ENCODE measurements at regions of chr16 and their contacts with region 1.

Region 1: DNA sequence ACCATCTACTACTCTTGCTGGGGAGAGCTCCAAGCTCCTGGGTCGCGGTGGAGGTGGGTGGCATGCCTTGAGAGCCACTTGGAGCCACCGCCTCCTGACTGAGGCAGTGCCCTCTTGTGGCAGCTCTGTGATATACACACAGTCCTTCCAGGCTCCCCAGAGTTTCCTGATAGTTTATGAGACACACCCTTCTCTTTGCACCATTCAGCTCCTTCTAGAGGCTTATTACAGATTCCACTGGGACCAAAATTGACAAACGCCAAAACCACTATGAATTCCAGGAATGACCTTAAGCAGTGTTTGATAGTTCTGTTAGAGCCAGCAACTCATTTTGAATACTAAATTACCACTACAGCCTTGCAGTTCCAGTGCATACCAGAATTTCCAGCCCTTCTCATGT is 170.1 kb upstream of the CDH13 start:
- DNase-seq: peak; percentile 44 to 69
- H3K4me3 ChIP-seq: no peak overlapping the region
- H3K27ac ChIP-seq: no peak overlapping the region
- H3K4me1 ChIP-seq: no peaks in the 10 kb centered on the region
- H3K27me3 ChIP-seq: peaks cover 0 to 3% (median 0%) of the 10 kb centered on the region in 4 experiments; a peak in 1 of 7 replicates
- CTCF ChIP-seq: peak; percentile 82 to 89 (median 84)
- EP300 ChIP-seq: no peak
- POLR2A ChIP-seq: no peak
- RAD21 ChIP-seq: peak; percentile 74 to 82

Region 2: DNA sequence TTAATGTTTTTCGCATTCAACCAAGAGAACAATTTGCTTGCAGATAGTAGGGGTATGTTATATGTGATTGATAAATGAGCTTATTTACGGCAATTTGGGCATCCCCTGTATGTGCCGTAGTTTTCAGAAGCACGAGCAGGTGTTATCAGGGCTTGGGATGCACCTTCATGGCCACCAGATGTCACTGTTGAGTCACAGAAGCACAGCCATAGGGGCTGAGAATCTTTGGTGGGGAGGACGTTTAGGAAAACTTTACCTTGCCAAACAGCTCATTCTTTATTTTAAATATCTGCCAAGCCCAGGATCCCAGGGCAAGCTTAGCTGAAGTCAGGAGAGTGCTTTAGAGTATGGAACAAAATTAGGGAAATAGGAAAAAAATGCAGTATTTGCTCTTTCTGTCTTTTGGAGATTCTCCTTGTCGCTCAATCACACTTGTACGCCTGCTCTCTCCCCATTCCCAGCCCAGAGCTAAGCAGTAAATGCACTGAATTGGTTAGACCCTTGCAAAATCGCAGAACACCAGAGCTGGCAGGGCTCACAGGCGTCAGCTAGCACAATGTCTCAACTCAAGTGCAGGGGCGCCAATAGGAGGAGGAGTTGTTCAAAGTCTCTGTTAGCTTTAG is 193.1 kb before region 1 on chr16:
- CTCF ChIA-PET with region 1: interaction called, 99 read pairs
- POLR2A ChIA-PET with region 1: no interaction called
- DNase-seq: peak in 1 of 2 experiments; percentile 68
- H3K4me3 ChIP-seq: no peak overlapping the region
- H3K27ac ChIP-seq: no peak overlapping the region
- H3K4me1 ChIP-seq: no peaks in the 10 kb centered on the region
- H3K27me3 ChIP-seq: no peaks in the 10 kb centered on the region
- CTCF ChIP-seq: peak; percentile 81 to 93 (median 87)
- EP300 ChIP-seq: no peak
- POLR2A ChIP-seq: no peak
- RAD21 ChIP-seq: peak; percentile 96 to 97

Region 3: DNA sequence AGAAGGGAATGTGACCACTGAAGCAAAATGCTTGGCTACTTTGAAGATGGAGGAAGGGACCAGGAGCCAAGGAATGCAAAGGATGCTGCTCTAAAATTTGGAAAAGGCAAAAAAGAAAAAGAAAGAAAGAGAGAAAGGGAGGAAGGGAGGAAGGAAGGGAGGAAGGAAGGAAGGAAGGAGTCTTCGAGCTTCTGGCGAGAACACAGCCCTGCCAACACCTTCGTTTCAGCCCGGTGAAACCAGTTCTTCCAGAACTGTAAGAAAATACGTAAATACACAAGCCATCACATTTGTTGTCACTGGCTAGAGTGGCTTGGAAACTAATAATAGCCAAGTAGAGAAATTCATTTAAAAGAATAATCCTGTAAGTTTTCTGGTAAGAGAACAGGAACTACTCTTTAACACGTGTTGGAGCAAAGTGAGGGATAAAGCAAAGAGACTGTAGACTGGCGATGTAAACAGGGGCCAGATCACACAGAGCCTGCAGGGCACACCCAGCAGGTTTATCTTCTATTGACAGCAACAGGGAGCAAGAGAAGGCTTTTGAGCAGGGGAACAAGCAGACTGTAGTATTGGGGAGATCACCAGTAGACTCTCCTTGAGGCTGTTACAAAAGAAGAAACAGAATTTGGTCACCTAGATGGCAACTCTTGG is 98.0 kb before region 1 on chr16:
- CTCF ChIA-PET with region 1: interaction called, 10 read pairs
- POLR2A ChIA-PET with region 1: no interaction called
- DNase-seq: no peak
- H3K4me3 ChIP-seq: no peak overlapping the region
- H3K27ac ChIP-seq: no peak overlapping the region
- H3K4me1 ChIP-seq: no peaks in the 10 kb centered on the region; a peak in 1 of 7 replicates
- H3K27me3 ChIP-seq: no peaks in the 10 kb centered on the region
- CTCF ChIP-seq: no peak
- EP300 ChIP-seq: no peak
- POLR2A ChIP-seq: no peak
- RAD21 ChIP-seq: no peak

Region 4: GRCh38 chr16:82421851-82422250 is 34.8 kb before region 1 on chr16:
- CTCF ChIA-PET with region 1: interaction called, 13 read pairs
- POLR2A ChIA-PET with region 1: no interaction called
- DNase-seq: no peak
- H3K4me3 ChIP-seq: no peak overlapping the region
- H3K27ac ChIP-seq: no peak overlapping the region
- H3K4me1 ChIP-seq: no peaks in the 10 kb centered on the region
- H3K27me3 ChIP-seq: no peaks in the 10 kb centered on the region
- CTCF ChIP-seq: no peak
- EP300 ChIP-seq: no peak
- POLR2A ChIP-seq: no peak
- RAD21 ChIP-seq: no peak

Region 5: DNA sequence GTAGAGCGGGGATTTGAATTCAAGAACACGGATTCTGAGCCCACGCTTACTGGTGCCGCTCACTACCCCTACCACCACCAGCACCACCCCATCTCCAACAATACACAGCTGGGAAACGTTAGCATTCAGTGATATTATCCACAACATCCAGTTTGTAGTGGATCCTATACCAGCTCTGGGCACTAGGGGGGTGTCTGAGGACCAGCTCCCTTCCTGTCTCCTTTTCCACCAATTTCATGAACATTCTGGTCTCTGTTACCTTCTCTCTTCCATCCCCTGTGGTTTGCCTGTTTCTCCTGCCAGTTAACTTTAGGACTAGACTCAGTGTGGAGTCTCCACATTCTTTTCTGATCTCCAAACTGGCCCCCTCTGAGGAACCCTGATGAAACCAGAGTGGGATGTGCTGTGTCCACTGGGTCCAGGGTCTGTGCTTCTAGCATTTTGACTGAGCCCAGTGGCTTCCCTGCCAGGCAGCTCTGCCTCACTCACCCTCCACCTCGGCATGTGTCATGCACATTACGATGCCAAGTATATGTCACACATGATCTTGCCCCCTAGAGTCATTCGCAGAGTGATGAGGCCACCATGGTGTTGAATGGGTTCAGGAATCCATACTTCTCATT is 16.9 kb before region 1 on chr16:
- CTCF ChIA-PET with region 1: interaction called, 69 read pairs
- POLR2A ChIA-PET with region 1: no interaction called
- DNase-seq: peak in 1 of 2 experiments; percentile 57
- H3K4me3 ChIP-seq: no peak overlapping the region
- H3K27ac ChIP-seq: no peak overlapping the region
- H3K4me1 ChIP-seq: peaks cover 0 to 2% (median 0%) of the 10 kb centered on the region in 4 experiments; a peak in 1 of 7 replicates
- H3K27me3 ChIP-seq: no peaks in the 10 kb centered on the region
- CTCF ChIP-seq: peak; percentile 37 to 78 (median 53); a peak in 3 of 4 replicates
- EP300 ChIP-seq: no peak
- POLR2A ChIP-seq: no peak
- RAD21 ChIP-seq: peak; percentile 35 to 42; a peak in 3 of 4 replicates

Region 6: DNA sequence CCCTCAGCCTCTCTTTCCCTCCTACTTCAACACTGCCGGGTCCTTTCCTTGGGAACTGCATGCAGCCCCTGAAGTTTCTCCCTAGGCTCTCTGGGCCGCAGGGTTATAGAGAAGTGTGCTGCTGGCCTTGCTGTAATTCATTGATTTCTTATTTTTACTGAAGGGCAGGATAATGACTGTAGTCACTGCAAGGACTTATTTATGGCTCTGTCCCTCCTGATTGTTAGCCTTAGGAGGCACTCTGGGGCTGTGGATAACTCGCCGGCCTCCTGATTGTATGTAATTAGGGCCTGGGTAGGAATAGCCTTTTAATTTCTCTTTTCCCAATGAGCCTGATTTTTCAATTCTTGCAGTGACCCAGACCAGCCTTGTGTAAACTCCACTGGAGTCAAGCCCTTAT is 31.8 kb after region 1 on chr16:
- CTCF ChIA-PET with region 1: interaction called, 13 read pairs
- POLR2A ChIA-PET with region 1: no interaction called
- DNase-seq: no peak
- H3K4me3 ChIP-seq: no peak overlapping the region
- H3K27ac ChIP-seq: no peak overlapping the region
- H3K4me1 ChIP-seq: no peaks in the 10 kb centered on the region
- H3K27me3 ChIP-seq: no peaks in the 10 kb centered on the region
- CTCF ChIP-seq: no peak
- EP300 ChIP-seq: no peak
- POLR2A ChIP-seq: no peak
- RAD21 ChIP-seq: no peak

Region 7: GRCh38 chr16:82639666-82640336 is 183.1 kb after region 1 on chr16:
- CTCF ChIA-PET with region 1: interaction called, 12 read pairs
- POLR2A ChIA-PET with region 1: no interaction called
- DNase-seq: peak in 1 of 2 experiments; percentile 83
- H3K4me3 ChIP-seq: no peak overlapping the region
- H3K27ac ChIP-seq: no peak overlapping the region
- H3K4me1 ChIP-seq: peaks cover 2 to 5% (median 4%) of the 10 kb centered on the region in 4 experiments; a peak in 5 of 7 replicates
- H3K27me3 ChIP-seq: no peaks in the 10 kb centered on the region
- CTCF ChIP-seq: peak; percentile 81 to 98 (median 91)
- EP300 ChIP-seq: no peak
- POLR2A ChIP-seq: no peak
- RAD21 ChIP-seq: peak; percentile 75 to 80